ENCODE measurements at regions of chr11 and their contacts with region 1.

Region 1: DNA sequence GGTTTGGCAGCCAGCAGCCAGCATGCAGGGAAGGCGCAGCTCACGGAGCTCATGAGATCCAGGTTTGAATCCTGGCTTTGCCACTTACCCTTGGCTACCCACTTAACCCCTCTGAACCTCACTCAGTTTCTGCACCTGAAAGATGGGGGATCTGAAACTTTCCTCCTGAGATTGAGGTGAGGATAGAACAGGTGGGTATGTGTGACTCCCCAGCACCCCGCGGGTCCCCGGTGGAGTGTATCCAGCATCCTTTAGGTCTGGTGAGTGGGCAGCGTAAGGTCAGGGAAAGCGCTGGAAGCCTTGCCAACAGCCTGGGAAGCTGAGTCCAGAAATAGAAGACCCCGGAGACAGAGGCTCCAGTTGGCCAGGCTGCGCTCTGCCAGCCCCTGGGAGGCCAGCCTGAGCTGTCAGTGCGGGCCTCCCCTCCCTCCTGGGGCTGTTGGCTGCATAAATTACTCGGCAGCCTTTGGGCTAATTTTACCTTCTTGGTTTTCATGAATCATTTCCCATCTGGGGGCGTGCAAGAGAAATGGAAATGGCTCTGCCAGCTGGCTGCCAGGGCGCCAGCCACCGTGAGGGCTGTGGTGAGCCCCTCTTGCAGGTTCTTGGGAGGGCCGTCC is 17.6 kb downstream of the PRDM11 start:
- DNase-seq: no peak
- H3K4me3 ChIP-seq: no peak overlapping the region
- H3K27ac ChIP-seq: no peak overlapping the region
- H3K4me1 ChIP-seq: peaks cover 3% of the 10 kb centered on the region
- H3K27me3 ChIP-seq: no peaks in the 10 kb centered on the region
- CTCF ChIP-seq: no peak

Region 2: GRCh38 chr11:45204761-45205160 is 40.7 kb after region 1 on chr11:
- CTCF ChIA-PET with region 1: no interaction called
- dilution Hi-C with region 1: loop called (anchors 5 kb)
- in situ Hi-C with region 1: no loop called
- intact Hi-C with region 1: no loop called
- DNase-seq: no peak
- H3K4me3 ChIP-seq: no peak overlapping the region
- H3K27ac ChIP-seq: no peak overlapping the region
- H3K4me1 ChIP-seq: no peaks in the 10 kb centered on the region
- H3K27me3 ChIP-seq: no peaks in the 10 kb centered on the region
- CTCF ChIP-seq: no peak

Region 3: DNA sequence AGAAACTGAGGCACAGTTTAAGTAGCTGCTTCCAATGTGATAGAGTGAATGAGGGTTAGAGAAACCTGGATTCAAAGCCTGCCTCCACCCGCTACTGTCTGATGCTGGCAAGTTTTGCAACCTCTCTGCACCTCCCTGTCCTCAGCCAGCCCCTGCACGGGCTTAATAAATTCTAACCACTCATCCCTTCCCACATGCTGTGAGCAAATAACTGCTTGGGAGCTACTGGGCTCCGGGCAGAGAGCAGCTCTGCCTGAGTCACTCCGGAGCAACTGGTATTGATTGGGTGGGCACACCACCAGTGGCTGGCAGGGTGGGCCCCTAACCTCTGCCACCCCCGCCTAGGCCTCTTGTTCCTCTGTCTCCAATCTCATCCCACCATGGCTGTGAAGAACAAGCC is 226.3 kb after region 1 on chr11:
- CTCF ChIA-PET with region 1: no interaction called
- dilution Hi-C with region 1: no loop called
- in situ Hi-C with region 1: no loop called
- intact Hi-C with region 1: no loop called
- DNase-seq: no peak
- H3K4me3 ChIP-seq: no peak overlapping the region
- H3K27ac ChIP-seq: no peak overlapping the region
- H3K4me1 ChIP-seq: no peaks in the 10 kb centered on the region
- H3K27me3 ChIP-seq: peaks cover 3% of the 10 kb centered on the region
- CTCF ChIP-seq: no peak